ENCODE measurements at regions of chr17 and their contacts with region 1.

Region 1: GRCh38 chr17:74659898-74660297 is 36.4 kb upstream of the CD300E start:
- DNase-seq: no peak
- H3K4me3 ChIP-seq: no peak overlapping the region
- H3K4me3 Mint-ChIP-seq: no peak overlapping the region
- H3K27ac ChIP-seq: no peak overlapping the region
- H3K27ac Mint-ChIP-seq: no peak overlapping the region
- H3K4me1 ChIP-seq: peaks cover 3% of the 10 kb centered on the region
- H3K4me1 Mint-ChIP-seq: peaks cover 4 to 7% (median 5%) of the 10 kb centered on the region in 4 donors
- H3K27me3 ChIP-seq: no peaks in the 10 kb centered on the region
- H3K27me3 Mint-ChIP-seq: peaks cover 21 to 25% of the 10 kb centered on the region in 2 donors

Region 2: DNA sequence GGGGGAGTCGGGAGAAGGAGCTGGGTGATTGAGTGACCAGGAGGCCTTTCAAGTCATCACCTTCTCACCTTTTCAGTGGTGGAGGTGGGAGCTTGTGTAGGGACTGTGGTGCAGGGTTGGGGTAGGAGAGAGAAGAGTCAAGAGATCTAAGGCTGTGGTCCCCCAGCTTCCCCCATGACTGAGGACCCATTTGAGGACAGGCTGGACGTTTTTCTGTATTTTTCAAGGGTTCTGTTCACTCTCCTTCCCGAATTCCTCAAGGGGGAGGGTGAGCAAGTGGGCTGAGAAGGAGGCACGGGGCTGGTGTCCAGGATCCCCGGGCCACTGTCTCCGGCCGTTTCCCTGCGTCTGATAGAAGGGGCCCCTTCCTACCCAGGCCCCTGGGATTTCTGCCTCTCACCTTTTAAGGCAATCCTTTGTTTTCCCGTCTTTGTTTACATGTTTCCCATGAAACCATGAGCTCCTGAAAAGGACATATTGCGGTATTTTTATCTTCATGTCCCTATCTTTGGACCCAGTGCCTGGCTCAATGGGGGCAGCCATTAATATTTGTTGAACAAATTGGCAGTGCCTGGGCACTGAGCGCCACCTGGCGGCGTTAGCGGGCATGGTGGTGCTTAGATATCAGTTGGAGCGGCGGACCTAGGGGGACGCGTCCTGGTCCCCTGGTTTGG is 202.6 kb before region 1 on chr17:
- CTCF ChIA-PET with region 1: no interaction called
- POLR2A ChIA-PET with region 1: no interaction called
- intact Hi-C with region 1: no loop called
- DNase-seq: peak; percentile 58 to 70 (median 64)
- H3K4me3 ChIP-seq: no peak overlapping the region
- H3K4me3 Mint-ChIP-seq: peak overlapping the region in 5 of 8 donors; percentile 26 to 71 (median 36)
- H3K27ac ChIP-seq: no peak overlapping the region
- H3K27ac Mint-ChIP-seq: peak overlapping the region in 5 of 7 donors; percentile 43 to 77 (median 61)
- H3K4me1 ChIP-seq: peaks cover 56% of the 10 kb centered on the region
- H3K4me1 Mint-ChIP-seq: peaks cover 18 to 57% (median 37%) of the 10 kb centered on the region in 4 donors
- H3K27me3 ChIP-seq: no peaks in the 10 kb centered on the region
- H3K27me3 Mint-ChIP-seq: no peaks in the 10 kb centered on the region

Region 3: GRCh38 chr17:74619077-74619673 is 40.7 kb before region 1 on chr17:
- CTCF ChIA-PET with region 1: no interaction called
- POLR2A ChIA-PET with region 1: no interaction called
- intact Hi-C with region 1: no loop called
- DNase-seq: no peak
- H3K4me3 ChIP-seq: no peak overlapping the region
- H3K4me3 Mint-ChIP-seq: no peak overlapping the region
- H3K27ac ChIP-seq: no peak overlapping the region
- H3K27ac Mint-ChIP-seq: no peak overlapping the region
- H3K4me1 ChIP-seq: no peaks in the 10 kb centered on the region
- H3K4me1 Mint-ChIP-seq: peaks cover 0 to 1% (median 0%) of the 10 kb centered on the region in 4 donors
- H3K27me3 ChIP-seq: no peaks in the 10 kb centered on the region
- H3K27me3 Mint-ChIP-seq: peaks cover 24 to 43% of the 10 kb centered on the region in 2 donors

Region 4: DNA sequence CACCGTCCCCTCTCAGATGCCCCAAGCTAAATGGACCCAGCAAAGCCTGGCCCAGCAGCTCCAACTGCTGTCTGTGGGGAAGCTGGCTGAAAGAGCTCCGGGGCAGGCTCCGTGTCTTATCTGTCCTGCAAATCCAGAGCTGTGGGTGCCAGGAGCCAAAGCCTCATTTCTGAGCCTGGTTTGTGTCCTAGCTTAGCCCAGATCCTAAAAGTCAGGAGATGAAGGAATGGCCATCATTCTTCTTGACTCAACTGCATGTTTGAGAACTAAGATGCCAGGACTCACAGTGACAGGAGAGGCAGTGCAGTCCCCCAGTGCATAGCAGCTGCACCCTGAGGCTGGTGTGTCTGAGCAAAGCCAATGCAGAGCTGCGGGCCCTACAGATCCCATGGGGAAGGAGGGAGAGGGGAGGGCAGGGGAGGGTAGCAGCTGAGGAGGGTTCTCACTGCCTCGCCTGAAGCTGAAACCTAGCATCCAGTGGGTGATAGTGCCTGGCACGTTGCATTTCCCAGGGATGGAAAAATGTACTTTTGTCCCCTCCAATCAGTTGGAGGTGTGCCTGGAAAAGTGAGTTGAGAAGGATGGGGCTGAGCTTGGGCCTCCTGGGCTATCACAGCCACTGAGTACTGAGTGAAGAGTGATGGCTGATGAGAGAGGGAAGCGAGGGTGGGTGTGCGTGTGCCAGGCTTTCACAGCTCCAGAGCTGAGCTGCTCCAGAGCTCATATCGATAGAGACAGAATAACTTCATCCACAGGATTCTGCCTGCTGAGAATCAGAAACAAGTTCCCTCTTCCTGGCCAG is 11.8 kb before region 1 on chr17:
- CTCF ChIA-PET with region 1: interaction called, 16 read pairs
- POLR2A ChIA-PET with region 1: no interaction called
- intact Hi-C with region 1: no loop called
- DNase-seq: no peak
- H3K4me3 ChIP-seq: no peak overlapping the region
- H3K4me3 Mint-ChIP-seq: no peak overlapping the region
- H3K27ac ChIP-seq: no peak overlapping the region
- H3K27ac Mint-ChIP-seq: no peak overlapping the region
- H3K4me1 ChIP-seq: no peaks in the 10 kb centered on the region
- H3K4me1 Mint-ChIP-seq: no peaks in the 10 kb centered on the region
- H3K27me3 ChIP-seq: peaks cover 5% of the 10 kb centered on the region
- H3K27me3 Mint-ChIP-seq: peaks cover 32 to 33% of the 10 kb centered on the region in 2 donors

Region 5: DNA sequence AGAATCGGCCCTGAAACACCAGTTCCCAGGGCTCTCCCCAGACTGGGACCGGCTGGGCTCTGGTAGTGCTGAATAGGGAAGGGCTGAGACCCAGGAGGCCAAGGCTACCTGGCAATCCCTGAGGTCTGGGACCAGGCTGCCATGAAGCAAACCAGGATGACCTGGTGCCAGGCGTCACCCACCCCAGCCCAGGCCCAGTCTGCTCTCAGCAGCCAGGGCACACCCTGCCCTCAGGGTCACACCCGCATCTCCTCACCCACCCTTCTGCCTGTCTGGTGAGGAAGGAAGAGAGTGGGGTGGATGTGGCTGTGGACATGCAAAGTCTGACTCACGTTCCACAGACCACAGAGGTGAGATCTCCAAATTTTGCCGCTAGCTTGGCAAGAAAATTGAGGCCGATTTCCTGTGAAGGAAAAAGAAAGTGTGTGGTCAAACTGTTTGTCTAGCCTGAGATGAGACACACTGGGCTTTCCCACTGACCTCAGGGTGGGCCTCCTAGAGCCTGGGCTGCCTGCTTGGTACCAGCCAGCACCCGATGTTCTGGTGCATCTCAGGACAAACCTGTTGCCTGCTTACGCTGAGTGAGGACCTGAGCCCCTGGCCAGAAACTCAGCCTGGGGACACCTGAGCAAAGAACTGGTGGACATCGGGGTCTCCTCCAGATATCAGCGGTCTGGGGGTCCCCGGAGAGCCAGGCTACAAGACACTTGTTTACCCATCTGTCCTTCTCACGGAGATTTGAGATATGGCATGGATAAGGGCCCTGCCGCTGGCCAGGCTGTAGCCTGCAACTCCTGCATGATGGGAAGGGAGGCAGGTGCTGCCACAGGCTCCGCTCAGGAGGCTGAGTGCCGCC is 70.8 kb after region 1 on chr17:
- CTCF ChIA-PET with region 1: interaction called, 326 read pairs
- POLR2A ChIA-PET with region 1: interaction called, 85 read pairs
- intact Hi-C with region 1: no loop called
- DNase-seq: peak in 4 of 5 donors; percentile 60 to 83 (median 67)
- H3K4me3 ChIP-seq: no peak overlapping the region
- H3K4me3 Mint-ChIP-seq: peak overlapping the region in 7 of 8 donors; percentile 11 to 80 (median 43)
- H3K27ac ChIP-seq: no peak overlapping the region
- H3K27ac Mint-ChIP-seq: peak overlapping the region in 3 of 7 donors; percentile 26 to 74 (median 42)
- H3K4me1 ChIP-seq: peaks cover 32% of the 10 kb centered on the region
- H3K4me1 Mint-ChIP-seq: peaks cover 0 to 17% (median 12%) of the 10 kb centered on the region in 4 donors
- H3K27me3 ChIP-seq: no peaks in the 10 kb centered on the region
- H3K27me3 Mint-ChIP-seq: no peaks in the 10 kb centered on the region

Region 6: DNA sequence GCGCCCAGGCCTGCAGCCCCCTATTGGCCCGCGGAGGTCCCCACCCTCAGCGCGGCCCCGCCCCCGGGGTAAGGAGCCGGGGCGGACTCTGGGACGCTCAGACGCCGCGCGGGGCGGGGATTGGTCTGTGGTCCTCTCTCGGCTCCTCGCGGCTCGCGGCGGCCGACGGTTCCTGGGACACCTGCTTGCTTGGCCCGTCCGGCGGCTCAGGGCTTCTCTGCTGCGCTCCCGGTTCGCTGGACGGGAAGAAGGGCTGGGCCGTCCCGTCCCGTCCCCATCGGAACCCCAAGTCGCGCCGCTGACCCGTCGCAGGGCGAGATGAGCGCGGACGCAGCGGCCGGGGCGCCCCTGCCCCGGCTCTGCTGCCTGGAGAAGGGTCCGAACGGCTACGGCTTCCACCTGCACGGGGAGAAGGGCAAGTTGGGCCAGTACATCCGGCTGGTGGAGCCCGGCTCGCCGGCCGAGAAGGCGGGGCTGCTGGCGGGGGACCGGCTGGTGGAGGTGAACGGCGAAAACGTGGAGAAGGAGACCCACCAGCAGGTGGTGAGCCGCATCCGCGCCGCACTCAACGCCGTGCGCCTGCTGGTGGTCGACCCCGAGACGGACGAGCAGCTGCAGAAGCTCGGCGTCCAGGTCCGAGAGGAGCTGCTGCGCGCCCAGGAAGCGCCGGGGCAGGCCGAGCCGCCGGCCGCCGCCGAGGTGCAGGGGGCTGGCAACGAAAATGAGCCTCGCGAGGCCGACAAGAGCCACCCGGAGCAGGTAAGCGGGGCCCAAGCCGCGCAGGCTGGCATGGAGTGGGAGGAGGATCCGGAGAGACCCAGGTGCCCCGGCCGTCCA is 88.8 kb after region 1 on chr17 and contains the start of gene NHERF1:
- CTCF ChIA-PET with region 1: interaction called, 59 read pairs
- POLR2A ChIA-PET with region 1: interaction called, 8 read pairs
- intact Hi-C with region 1: no loop called
- DNase-seq: peak; percentile 61 to 96 (median 94)
- H3K4me3 ChIP-seq: peak within 1 kb of the TSS; percentile 64 to 92
- H3K4me3 Mint-ChIP-seq: peak within 1 kb of the TSS; percentile 90 to 99 (median 98)
- H3K27ac ChIP-seq: peak within 1 kb of the TSS; percentile 80
- H3K27ac Mint-ChIP-seq: peak within 1 kb of the TSS; percentile 88 to 98 (median 94)
- H3K4me1 ChIP-seq: peaks cover 73% of the 10 kb centered on the region
- H3K4me1 Mint-ChIP-seq: peaks cover 43 to 81% (median 60%) of the 10 kb centered on the region in 4 donors
- H3K27me3 ChIP-seq: no peaks in the 10 kb centered on the region
- H3K27me3 Mint-ChIP-seq: no peaks in the 10 kb centered on the region
- total RNA-seq, gene NHERF1: 202 to 209 TPM

Region 7: DNA sequence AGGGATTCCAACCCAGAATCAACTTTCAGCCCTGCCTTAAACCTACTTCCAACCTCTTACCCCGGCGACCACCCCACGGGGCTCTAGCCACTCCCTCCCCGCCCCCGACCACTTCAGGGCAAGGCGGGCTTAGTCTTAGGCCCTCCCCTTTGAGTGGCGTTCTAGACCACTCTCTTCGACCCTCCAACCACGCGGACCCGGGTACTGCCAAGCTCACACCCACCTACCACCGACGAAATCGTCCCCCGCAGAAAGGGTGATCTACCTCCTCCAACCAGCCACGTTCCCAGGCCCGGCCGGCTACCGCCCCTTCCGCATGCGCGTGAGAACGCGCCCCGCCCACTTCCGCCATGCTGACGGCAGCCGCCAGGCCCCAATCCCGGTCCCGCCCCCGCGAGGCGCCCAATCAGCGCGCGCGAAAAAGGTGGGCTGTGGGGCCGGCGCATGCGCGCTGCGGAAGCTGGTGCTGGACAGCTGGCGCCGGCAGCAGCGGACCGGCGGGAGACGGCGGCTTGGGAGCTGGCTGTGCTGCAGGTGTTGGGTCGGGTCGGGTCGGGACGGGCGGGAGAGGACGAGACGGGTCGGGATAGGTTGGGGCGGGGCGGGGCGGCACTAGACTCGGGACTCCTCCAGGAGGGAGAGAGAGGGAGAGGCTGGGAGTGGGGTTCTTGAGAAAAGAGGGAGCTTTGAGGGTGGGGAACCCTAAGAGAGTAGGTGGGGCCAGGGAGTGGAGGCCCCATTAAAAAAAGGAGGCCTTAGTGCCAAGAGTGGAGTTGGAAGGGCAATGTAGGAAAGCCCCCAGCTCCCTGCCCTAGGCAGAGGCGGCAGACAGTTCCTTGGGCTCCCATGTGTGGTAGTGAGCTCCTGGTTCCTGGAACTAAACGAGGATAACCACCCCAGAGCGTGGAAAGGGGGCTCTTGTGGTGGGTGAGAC is 116.4 kb after region 1 on chr17 and contains the start of gene NAT9:
- CTCF ChIA-PET with region 1: interaction called, 181 read pairs
- POLR2A ChIA-PET with region 1: interaction called, 29 read pairs
- intact Hi-C with region 1: no loop called
- DNase-seq: peak; percentile 95 to 99 (median 97)
- H3K4me3 ChIP-seq: peak within 1 kb of the TSS; percentile 64 to 89
- H3K4me3 Mint-ChIP-seq: peak within 1 kb of the TSS; percentile 95 to 100 (median 99)
- H3K27ac ChIP-seq: peak within 1 kb of the TSS; percentile 77
- H3K27ac Mint-ChIP-seq: peak within 1 kb of the TSS; percentile 93 to 99 (median 97)
- H3K4me1 ChIP-seq: peaks cover 65% of the 10 kb centered on the region
- H3K4me1 Mint-ChIP-seq: peaks cover 45 to 83% (median 61%) of the 10 kb centered on the region in 4 donors
- H3K27me3 ChIP-seq: no peaks in the 10 kb centered on the region
- H3K27me3 Mint-ChIP-seq: no peaks in the 10 kb centered on the region
- total RNA-seq, gene NAT9: 60.0 to 70.3 TPM

Region 8: GRCh38 chr17:74864866-74865395 is 205.0 kb after region 1 on chr17:
- CTCF ChIA-PET with region 1: interaction called, 56 read pairs
- POLR2A ChIA-PET with region 1: interaction called, 4 read pairs
- intact Hi-C with region 1: loop called (anchors 1 kb)
- DNase-seq: peak; percentile 52 to 68 (median 62)
- H3K4me3 ChIP-seq: no peak overlapping the region
- H3K4me3 Mint-ChIP-seq: peak overlapping the region in 1 of 8 donors; percentile 65
- H3K27ac ChIP-seq: no peak overlapping the region
- H3K27ac Mint-ChIP-seq: peak overlapping the region in 2 of 7 donors; percentile 6 to 68
- H3K4me1 ChIP-seq: peaks cover 23% of the 10 kb centered on the region
- H3K4me1 Mint-ChIP-seq: peaks cover 12 to 20% (median 15%) of the 10 kb centered on the region in 4 donors
- H3K27me3 ChIP-seq: peaks cover 11% of the 10 kb centered on the region
- H3K27me3 Mint-ChIP-seq: peaks cover 1 to 7% of the 10 kb centered on the region in 2 donors

Measured in CD4-positive, alpha-beta memory T cell (primary cell).